B cell (primary cell): ENCODE measurements at regions of chr11 and their contacts with region 1.

Region 1: DNA sequence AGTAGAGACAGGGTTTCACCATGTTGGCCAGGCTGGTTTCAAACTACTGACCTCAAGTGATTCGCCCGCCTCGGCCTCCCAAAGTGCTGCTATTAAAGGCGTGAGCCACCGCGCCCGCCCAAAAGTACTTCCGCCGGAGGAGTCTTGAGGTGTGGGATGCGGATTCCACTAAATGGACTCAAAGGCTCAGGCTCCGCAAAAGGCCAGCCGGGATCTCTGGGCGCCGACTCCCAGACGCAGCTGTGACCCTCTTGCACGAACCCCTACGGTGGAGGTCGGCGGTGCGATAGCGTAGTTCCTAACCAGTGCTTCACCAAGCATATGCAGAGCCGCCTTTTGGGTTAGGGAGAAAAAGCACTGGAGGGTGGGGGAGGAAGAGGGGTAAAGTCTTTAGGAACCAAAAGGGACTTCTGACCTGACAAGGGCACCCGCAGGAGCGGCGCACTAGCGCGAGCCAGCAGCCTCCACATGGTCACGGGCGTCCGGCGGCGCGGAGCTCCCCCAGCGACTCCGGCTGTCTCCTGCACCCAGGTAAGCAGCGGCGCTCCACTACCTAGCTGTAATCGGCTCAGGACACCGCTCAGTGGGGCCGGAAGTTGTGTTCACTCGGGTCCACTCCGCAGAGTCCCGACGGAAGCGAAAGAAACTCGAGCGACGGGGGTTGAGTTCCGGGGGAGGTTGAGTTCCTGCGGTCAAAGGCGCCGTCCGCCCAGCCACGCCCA is at the start of gene MRPL16:
- DNase-seq: peak; percentile 94
- ATAC-seq: peak; percentile 98
- H3K4me3 ChIP-seq: peak within 1 kb of the TSS; percentile 72 to 95 (median 82)
- H3K4me3 Mint-ChIP-seq: peak within 1 kb of the TSS; percentile 93
- H3K27ac ChIP-seq: peak within 1 kb of the TSS; percentile 61 to 76
- H3K27ac Mint-ChIP-seq: peak within 1 kb of the TSS; percentile 85
- H3K4me1 ChIP-seq: peaks cover 10 to 18% of the 10 kb centered on the region in 2 donors
- H3K4me1 Mint-ChIP-seq: peaks cover 14% of the 10 kb centered on the region
- H3K27me3 ChIP-seq: no peaks in the 10 kb centered on the region
- H3K27me3 Mint-ChIP-seq: peaks cover 7% of the 10 kb centered on the region
- CTCF ChIP-seq: peak; percentile 52
- total RNA-seq, gene MRPL16: 38.3 and 38.9 TPM in 2 replicates

Region 2: DNA sequence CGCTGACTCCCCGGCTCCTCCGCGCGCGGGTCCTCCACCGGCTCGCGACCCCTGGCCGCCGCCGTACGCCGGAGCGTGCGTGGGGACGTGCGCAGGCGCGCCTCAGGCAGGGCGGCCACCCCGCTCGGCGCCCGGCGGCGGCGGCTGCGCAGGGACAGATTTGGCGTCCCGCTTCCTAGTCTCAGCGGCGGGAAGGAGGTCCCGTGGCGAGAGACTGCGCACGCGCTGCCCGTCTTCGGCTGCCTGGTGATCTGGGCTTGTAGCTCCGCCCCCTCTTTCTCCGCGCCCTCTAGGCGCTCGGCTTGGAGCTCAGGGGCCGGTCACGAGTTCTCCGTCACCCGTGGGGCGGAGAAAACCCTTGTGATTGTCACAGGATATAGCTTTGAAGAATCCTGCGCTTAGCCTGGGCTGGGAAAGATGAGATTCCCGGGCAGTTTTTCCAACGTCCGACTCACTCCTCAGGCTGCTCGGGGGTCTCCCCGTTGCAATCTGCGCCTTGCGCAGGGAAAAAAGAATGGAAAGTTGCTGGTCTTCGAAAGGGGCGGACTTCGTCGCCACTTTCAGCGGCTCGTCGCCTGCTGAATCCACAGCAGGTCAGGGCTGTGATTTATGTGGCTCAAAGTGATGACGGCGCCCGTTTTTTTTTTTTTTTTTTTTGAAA is 141.3 kb before region 1 on chr11 and contains the start of gene PATL1:
- CTCF ChIA-PET with region 1: no interaction called
- POLR2A ChIA-PET with region 1: interaction called, 3 read pairs
- intact Hi-C with region 1: loop called (anchors 5 kb)
- DNase-seq: peak; percentile 100
- ATAC-seq: peak; percentile 89
- H3K4me3 ChIP-seq: peak within 1 kb of the TSS; percentile 81 to 96 (median 93)
- H3K4me3 Mint-ChIP-seq: peak within 1 kb of the TSS; percentile 98
- H3K27ac ChIP-seq: peak within 1 kb of the TSS; percentile 98 to 100
- H3K27ac Mint-ChIP-seq: peak within 1 kb of the TSS; percentile 100
- H3K4me1 ChIP-seq: peaks cover 20% of the 10 kb centered on the region in 2 donors
- H3K4me1 Mint-ChIP-seq: peaks cover 33% of the 10 kb centered on the region
- H3K27me3 ChIP-seq: no peaks in the 10 kb centered on the region
- H3K27me3 Mint-ChIP-seq: no peaks in the 10 kb centered on the region
- CTCF ChIP-seq: peak; percentile 0
- total RNA-seq, gene PATL1: 45.0 and 46.0 TPM in 2 replicates

Region 3: GRCh38 chr11:59767225-59767611 is 43.1 kb before region 1 on chr11:
- CTCF ChIA-PET with region 1: interaction called, 6 read pairs
- POLR2A ChIA-PET with region 1: no interaction called
- intact Hi-C with region 1: loop called (anchors 5 kb)
- DNase-seq: no peak
- ATAC-seq: no peak
- H3K4me3 ChIP-seq: no peak overlapping the region
- H3K4me3 Mint-ChIP-seq: no peak overlapping the region
- H3K27ac ChIP-seq: peak overlapping the region in 1 of 2 donors; percentile 42
- H3K27ac Mint-ChIP-seq: peak overlapping the region; percentile 69
- H3K4me1 ChIP-seq: peaks cover 17 to 29% of the 10 kb centered on the region in 2 donors
- H3K4me1 Mint-ChIP-seq: peaks cover 22% of the 10 kb centered on the region
- H3K27me3 ChIP-seq: no peaks in the 10 kb centered on the region
- H3K27me3 Mint-ChIP-seq: no peaks in the 10 kb centered on the region
- CTCF ChIP-seq: no peak

Region 4: GRCh38 chr11:59992425-59992824 is 182.1 kb after region 1 on chr11:
- CTCF ChIA-PET with region 1: no interaction called
- POLR2A ChIA-PET with region 1: no interaction called
- intact Hi-C with region 1: no loop called
- DNase-seq: no peak
- ATAC-seq: no peak
- H3K4me3 ChIP-seq: no peak overlapping the region
- H3K4me3 Mint-ChIP-seq: no peak overlapping the region
- H3K27ac ChIP-seq: no peak overlapping the region
- H3K27ac Mint-ChIP-seq: no peak overlapping the region
- H3K4me1 ChIP-seq: no peaks in the 10 kb centered on the region
- H3K4me1 Mint-ChIP-seq: no peaks in the 10 kb centered on the region
- H3K27me3 ChIP-seq: no peaks in the 10 kb centered on the region
- H3K27me3 Mint-ChIP-seq: peaks cover 22% of the 10 kb centered on the region
- CTCF ChIP-seq: no peak

Region 5: GRCh38 chr11:60235321-60235720 is 425.0 kb after region 1 on chr11:
- CTCF ChIA-PET with region 1: no interaction called
- POLR2A ChIA-PET with region 1: no interaction called
- intact Hi-C with region 1: no loop called
- DNase-seq: no peak
- ATAC-seq: no peak
- H3K4me3 ChIP-seq: no peak overlapping the region
- H3K4me3 Mint-ChIP-seq: no peak overlapping the region
- H3K27ac ChIP-seq: no peak overlapping the region
- H3K27ac Mint-ChIP-seq: no peak overlapping the region
- H3K4me1 ChIP-seq: no peaks in the 10 kb centered on the region
- H3K4me1 Mint-ChIP-seq: no peaks in the 10 kb centered on the region
- H3K27me3 ChIP-seq: no peaks in the 10 kb centered on the region
- H3K27me3 Mint-ChIP-seq: peaks cover 5% of the 10 kb centered on the region
- CTCF ChIP-seq: no peak